ENCODE measurements at regions of chr6 and their contacts with region 1.

Region 1: DNA sequence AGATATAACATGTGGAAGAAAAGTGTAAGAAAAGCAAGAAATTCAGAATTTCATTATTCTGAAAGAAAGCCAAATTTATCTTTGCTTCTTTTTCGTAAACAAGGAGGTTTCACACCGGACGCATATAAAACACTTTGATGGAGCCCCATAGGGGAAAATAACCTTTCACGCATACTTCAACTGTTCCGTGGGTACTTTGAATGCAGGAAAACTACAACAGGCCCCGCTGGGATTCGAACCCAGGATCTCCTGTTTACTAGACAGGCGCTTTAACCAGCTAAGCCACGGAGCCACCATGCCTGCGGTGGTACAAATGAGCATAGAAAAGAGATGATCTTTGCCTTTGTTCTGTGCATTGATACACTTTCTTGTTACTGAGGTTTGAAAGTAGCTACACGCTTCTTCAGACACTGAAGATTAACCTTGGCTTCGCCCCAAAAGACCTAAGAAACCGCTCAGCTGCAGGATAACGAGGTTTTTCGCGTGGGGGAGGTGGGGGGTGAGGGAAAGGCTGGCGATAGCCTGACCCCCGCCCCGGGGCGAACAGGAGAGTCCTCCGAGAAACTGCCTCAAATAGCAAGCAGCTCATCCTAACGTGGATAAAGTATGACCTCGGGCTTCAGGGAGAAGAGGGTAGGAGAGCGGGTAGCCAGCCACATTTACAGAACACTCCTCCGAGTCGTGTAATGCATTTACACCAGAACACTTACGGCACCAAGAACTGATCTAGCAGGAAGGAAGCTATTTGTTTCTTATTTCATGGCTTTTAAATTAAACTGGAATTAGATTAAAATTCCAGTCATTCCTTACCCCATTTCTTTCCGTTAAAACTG is 5.3 kb upstream of the HMGN4 start:
- DNase-seq: peak in 1 of 2 experiments; percentile 98
- H3K4me3 ChIP-seq: peak overlapping the region; percentile 73 to 96 (median 93)
- H3K27ac ChIP-seq: 0 out of 2 replicates have a peak overlapping the region, but pooled peaks have one; percentile 53
- H3K4me1 ChIP-seq: peaks cover 0 to 13% (median 7%) of the 10 kb centered on the region in 4 experiments; a peak in 5 of 7 replicates
- H3K27me3 ChIP-seq: no peaks in the 10 kb centered on the region
- CTCF ChIP-seq: no peak
- EP300 ChIP-seq: no peak; a peak in 1 of 3 replicates
- POLR2A ChIP-seq: no peak; a peak in 1 of 3 replicates
- RAD21 ChIP-seq: no peak

Region 2: GRCh38 chr6:26520853-26521599 is 11.9 kb before region 1 on chr6:
- CTCF ChIA-PET with region 1: interaction called, 4 read pairs
- POLR2A ChIA-PET with region 1: interaction called, 36 read pairs
- DNase-seq: peak in 1 of 2 experiments; percentile 91
- H3K4me3 ChIP-seq: peak overlapping the region; percentile 58 to 94 (median 84)
- H3K27ac ChIP-seq: peak overlapping the region; percentile 84; the same call in 1 of the 2 replicates
- H3K4me1 ChIP-seq: peaks cover 0 to 3% (median 2%) of the 10 kb centered on the region in 4 experiments; a peak in 2 of 7 replicates
- H3K27me3 ChIP-seq: no peaks in the 10 kb centered on the region
- CTCF ChIP-seq: no peak
- EP300 ChIP-seq: no peak
- POLR2A ChIP-seq: peak; percentile 18 to 46; a peak in 2 of 3 replicates
- RAD21 ChIP-seq: no peak

Region 3: GRCh38 chr6:26553635-26554446 is 20.9 kb after region 1 on chr6:
- CTCF ChIA-PET with region 1: interaction called, 5 read pairs
- POLR2A ChIA-PET with region 1: interaction called, 40 read pairs
- DNase-seq: peak in 1 of 2 experiments; percentile 92
- H3K4me3 ChIP-seq: peak overlapping the region; percentile 77 to 96 (median 80)
- H3K27ac ChIP-seq: no peak overlapping the region
- H3K4me1 ChIP-seq: no peaks in the 10 kb centered on the region; a peak in 2 of 7 replicates
- H3K27me3 ChIP-seq: no peaks in the 10 kb centered on the region
- CTCF ChIP-seq: no peak
- EP300 ChIP-seq: no peak
- POLR2A ChIP-seq: no peak
- RAD21 ChIP-seq: no peak